ENCODE measurements at regions of chr17 and their contacts with region 1.

Region 1: DNA sequence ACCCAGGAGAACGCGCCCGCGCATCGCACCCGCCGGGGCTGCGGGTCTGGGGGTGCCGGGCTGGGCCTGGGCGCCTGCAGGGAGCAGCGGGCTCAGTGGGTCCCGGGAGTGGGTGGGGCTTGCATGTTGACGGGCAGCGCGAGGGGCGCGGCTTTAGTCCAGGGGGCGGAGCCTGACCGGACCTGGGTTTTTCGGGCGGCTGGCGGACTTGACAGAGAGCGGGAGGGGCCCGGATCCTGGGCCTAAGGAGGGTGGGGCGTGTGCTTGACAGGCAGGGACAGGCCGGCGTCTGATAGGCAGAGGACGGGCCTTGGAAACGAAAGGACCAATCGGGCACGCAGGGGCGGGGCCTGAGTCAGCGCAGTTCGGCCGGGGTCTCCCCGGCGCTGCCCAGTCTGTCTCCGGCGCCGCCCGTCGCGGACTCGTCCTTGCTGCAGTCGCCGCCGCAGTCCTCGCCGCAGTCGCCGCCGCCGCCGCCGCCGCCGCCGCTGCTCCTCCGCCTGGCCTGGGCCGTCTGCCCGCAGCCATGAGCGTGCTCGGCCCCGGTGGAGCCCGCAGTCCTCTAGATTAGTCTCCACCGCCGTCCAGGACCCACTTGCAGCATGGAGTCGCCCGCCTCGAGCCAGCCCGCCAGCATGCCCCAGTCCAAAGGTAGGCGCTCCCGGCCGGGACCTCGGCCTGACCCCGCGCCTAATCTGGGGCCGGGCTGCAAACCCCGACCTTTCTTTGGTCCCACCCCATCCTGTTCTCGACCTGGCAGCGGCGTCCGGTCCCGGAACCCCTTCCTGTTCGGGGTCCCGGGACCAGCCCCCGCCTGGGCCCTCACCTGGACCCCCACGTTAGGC is at the start of gene MAP2K3:
- DNase-seq: peak; percentile 100
- H3K4me3 ChIP-seq: peak within 1 kb of the TSS; percentile 57 to 78 (median 72)
- H3K27ac ChIP-seq: peak within 1 kb of the TSS; percentile 94 to 97 (median 94)
- H3K4me1 ChIP-seq: peaks cover 45 to 47% of the 10 kb centered on the region in 2 donors
- H3K27me3 ChIP-seq: no peaks in the 10 kb centered on the region
- CTCF ChIP-seq: no peak
- POLR2A ChIP-seq: peak; percentile 86 to 98
- total RNA-seq, gene MAP2K3: 15.5 to 23.4 (median 21.3) TPM

Region 2: GRCh38 chr17:21043286-21044232 is 241.0 kb before region 1 on chr17:
- intact Hi-C with region 1: loop called (anchors 10 kb)
- DNase-seq: peak; percentile 99
- H3K4me3 ChIP-seq: peak overlapping the region in 2 of 3 donors; percentile 28 to 61
- H3K27ac ChIP-seq: peak overlapping the region; percentile 93 to 99 (median 97)
- H3K4me1 ChIP-seq: peaks cover 16 to 33% of the 10 kb centered on the region in 2 donors
- H3K27me3 ChIP-seq: no peaks in the 10 kb centered on the region
- CTCF ChIP-seq: peak; percentile 66 to 93 (median 82)
- POLR2A ChIP-seq: peak in 1 of 2 donors; percentile 61

Region 3: DNA sequence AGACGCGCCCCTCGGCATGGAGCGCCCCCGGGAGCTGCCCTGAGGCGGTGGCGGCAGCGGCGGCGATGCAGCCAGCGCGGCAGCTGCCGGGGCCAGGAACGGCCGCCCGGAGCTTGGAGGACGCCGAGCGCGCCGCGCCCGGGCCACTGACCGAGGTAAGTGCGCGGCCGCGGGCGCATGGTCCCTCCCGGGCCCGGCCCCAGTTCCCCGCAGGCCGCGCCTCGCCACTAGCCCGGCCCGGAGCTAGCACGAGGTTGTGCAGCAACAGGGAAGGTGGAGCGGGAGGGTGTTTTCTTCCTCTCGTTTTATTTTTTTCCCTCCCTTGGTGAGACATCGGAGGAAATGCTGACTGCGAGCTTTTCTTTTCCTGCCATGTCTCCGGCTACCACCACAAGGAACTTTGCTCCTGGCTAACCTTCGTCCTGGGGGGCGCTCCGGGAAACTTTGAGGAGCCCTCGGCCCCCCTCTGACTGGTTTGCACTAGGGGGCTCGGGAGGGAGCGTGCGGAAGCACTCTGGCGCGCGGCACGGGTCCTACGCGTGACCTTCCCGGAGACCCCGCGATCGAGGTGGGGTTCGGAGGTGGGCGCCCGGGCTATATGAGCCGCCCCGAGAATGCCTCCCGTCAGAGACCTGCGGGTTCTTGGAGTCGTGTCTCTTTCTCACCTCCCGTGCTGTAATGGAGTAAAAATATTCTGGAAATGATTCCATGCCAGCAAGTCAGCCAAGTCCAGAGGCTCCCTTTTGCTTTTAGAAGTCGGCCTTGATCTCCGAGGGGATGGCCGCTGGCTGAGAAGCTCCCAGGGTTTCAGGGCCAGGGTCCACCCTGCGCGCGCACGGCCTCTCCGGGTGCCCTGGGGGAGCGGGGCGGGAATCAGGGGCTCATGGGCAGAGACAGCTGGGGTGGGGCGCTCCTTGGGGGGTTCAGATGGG is 92.5 kb after region 1 on chr17:
- intact Hi-C with region 1: loop called (anchors 10 kb)
- DNase-seq: peak; percentile 47 to 54
- H3K4me3 ChIP-seq: peak overlapping the region; percentile 20 to 48 (median 25)
- H3K27ac ChIP-seq: no peak overlapping the region
- H3K4me1 ChIP-seq: peaks cover 6 to 58% of the 10 kb centered on the region in 2 donors
- H3K27me3 ChIP-seq: no peaks in the 10 kb centered on the region
- CTCF ChIP-seq: no peak
- POLR2A ChIP-seq: no peak

Region 4: GRCh38 chr17:21457051-21458026 is 172.8 kb after region 1 on chr17:
- intact Hi-C with region 1: loop called (anchors 10 kb)
- DNase-seq: peak; percentile 90 to 93
- H3K4me3 ChIP-seq: no peak overlapping the region
- H3K27ac ChIP-seq: no peak overlapping the region
- H3K4me1 ChIP-seq: peaks cover 6% of the 10 kb centered on the region in 2 donors
- H3K27me3 ChIP-seq: no peaks in the 10 kb centered on the region
- CTCF ChIP-seq: peak; percentile 75 to 99 (median 86)
- POLR2A ChIP-seq: no peak

Region 5: DNA sequence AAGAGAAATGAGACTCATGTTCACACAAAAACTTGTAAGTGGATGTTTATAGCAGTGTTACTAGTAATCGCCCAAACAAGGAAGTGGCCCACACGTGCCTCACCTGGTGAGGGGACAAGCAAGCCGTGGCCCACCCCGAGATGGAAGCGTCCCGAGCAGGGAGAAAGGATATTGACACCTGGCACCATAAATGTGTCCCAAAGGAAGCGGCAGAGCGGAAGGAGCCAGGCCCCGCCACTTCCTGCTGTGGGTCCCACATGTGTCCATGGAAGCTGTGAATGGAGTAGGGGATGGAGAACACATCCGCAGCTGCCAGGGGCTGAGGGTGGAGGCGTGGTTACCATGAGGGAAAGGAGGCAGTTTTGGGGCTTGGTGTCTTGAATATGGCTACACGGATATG is 426.6 kb after region 1 on chr17:
- intact Hi-C with region 1: no loop called
- DNase-seq: no peak
- H3K4me3 ChIP-seq: no peak overlapping the region
- H3K27ac ChIP-seq: no peak overlapping the region
- H3K4me1 ChIP-seq: no peaks in the 10 kb centered on the region
- H3K27me3 ChIP-seq: no peaks in the 10 kb centered on the region
- CTCF ChIP-seq: no peak
- POLR2A ChIP-seq: no peak

Measured in thyroid gland (tissue), 4 donors.